Posterior cingulate gyrus (tissue), 11 donors: ENCODE measurements at regions of chr2 and their contacts with region 1.

Region 1: DNA sequence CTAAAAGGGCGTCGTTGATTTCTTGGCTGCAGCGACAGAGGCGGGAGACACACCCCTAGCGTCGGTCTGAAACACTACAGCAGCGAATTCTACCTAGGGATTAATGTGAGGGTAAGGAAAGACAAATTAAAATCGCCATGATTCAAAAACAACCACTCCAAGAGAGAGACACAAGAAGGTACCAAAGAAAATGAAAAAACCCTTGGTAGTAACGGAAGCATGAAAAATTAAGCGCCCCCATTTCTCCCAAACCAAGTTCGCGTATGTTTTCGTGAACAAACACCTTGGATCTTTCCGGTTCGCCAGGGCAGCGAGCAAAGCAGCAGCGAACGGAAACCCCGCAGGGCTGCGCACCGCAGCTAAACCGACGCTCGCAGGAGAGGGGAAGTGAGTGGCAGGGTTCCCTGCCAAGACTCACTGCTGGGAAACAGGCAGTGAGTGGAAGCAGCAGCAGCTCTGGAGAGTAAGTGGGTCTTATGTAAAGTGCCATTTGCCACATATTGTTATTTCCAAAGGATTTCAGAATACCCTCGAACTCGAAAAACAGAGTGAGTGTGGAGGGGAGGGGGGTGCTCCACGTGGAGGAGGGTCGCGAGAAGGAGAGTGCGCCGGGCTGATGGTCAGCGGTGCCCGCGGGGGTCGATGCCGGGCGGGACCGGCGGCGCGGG is 1.0 kb downstream of the PPP3R1 start:
- DNase-seq: peak; percentile 14 to 89 (median 47)

Region 2: GRCh38 chr2:68062680-68063387 is 188.5 kb before region 1 on chr2 and contains the start of gene C1D:
- intact Hi-C with region 1: loop called (anchors 10 kb)
- DNase-seq: peak; percentile 86 to 98 (median 92)

Region 3: GRCh38 chr2:68157402-68158133 is 93.8 kb before region 1 on chr2 and contains the start of gene PNO1:
- intact Hi-C with region 1: loop called (anchors 1 kb)
- DNase-seq: peak; percentile 93 to 99 (median 94)